ENCODE measurements at regions of chr1 and their contacts with region 1.

Region 1: DNA sequence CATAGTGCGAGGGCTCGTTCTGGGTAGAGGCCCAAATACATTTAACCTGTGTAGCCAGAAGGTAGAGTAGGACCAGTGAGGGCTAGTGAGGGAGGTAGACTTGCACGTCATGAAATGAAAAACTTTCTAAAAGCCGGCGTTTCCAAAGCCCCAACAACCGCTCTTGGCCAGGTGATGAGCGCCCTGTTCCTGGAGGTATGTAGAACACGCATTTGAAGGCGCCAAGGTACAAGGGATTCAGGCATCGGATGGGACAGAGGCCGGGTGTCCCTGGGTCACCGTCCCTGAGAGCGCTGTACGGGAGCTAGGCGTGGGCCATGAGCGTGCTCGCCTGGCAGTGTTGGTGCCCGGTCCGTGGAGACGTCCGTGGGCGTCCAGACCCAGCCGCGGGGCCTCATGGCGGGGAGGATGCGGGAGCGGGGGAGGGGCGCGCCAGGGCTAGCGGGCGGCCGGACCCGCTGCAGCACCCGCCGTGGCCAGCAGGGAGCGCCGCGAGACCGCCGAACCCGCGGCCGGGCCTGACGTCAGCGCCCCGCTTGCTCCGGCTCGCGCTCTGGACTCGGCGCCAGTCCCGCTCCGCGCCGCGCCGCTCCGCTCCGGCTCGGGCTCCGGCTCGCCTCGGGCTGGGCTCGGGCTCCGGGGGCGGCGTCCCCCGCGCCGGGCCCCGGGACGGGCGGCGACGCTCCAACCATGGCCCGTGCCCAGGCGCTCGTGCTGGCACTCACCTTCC is at the start of gene PTPRU:
- DNase-seq: peak; percentile 50 to 60
- ATAC-seq: peak; percentile 58 to 62
- H3K4me3 ChIP-seq: peak within 1 kb of the TSS; percentile 59 to 77 (median 72)
- H3K27ac ChIP-seq: peak within 1 kb of the TSS; percentile 73 to 86 (median 80)
- H3K4me1 ChIP-seq: peaks cover 9 to 11% of the 10 kb centered on the region in 2 donors
- H3K27me3 ChIP-seq: no peaks in the 10 kb centered on the region
- CTCF ChIP-seq: peak; percentile 59 to 99 (median 98)
- POLR2A ChIP-seq: peak; percentile 56 to 58
- total RNA-seq, gene PTPRU: 11.4 to 59.4 (median 35.3) TPM

Region 2: DNA sequence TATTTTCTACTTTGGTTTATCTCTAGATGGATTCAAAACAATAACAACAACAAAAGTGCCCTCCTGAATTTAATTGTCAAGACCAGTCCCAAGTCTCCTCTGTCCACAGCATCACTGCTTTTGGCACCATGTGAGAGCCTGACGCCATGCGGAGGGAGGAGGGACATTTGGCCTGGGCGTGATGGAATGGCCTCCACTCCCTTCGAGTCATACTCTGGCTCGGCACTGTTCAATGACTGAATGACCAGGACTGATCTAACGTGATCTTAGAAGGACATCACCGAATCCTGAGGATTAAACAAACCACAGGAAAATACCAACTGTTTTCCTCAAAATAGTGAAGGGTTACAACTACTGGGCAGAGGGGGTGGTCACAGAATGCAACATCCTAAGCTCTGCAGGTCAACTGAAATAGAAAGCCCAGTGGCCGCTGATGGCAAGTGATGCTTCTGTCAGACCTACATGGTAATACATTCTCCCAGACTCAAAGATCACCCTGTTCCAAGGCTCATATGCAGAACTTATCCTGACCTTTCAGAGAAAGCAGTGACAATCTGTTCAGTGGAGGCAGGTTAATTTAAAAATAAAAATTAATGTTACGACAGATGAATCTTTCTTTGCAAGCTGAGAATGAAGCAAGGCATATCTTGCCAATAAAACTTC is 73.5 kb before region 1 on chr1:
- in situ Hi-C with region 1: no loop called
- intact Hi-C with region 1: no loop called
- DNase-seq: peak in 1 of 2 donors; percentile 38
- ATAC-seq: peak; percentile 63 to 72
- H3K4me3 ChIP-seq: no peak overlapping the region
- H3K27ac ChIP-seq: peak overlapping the region; percentile 3 to 47 (median 15)
- H3K4me1 ChIP-seq: peaks cover 40 to 49% of the 10 kb centered on the region in 2 donors
- H3K27me3 ChIP-seq: no peaks in the 10 kb centered on the region
- CTCF ChIP-seq: no peak
- POLR2A ChIP-seq: no peak

Region 3: DNA sequence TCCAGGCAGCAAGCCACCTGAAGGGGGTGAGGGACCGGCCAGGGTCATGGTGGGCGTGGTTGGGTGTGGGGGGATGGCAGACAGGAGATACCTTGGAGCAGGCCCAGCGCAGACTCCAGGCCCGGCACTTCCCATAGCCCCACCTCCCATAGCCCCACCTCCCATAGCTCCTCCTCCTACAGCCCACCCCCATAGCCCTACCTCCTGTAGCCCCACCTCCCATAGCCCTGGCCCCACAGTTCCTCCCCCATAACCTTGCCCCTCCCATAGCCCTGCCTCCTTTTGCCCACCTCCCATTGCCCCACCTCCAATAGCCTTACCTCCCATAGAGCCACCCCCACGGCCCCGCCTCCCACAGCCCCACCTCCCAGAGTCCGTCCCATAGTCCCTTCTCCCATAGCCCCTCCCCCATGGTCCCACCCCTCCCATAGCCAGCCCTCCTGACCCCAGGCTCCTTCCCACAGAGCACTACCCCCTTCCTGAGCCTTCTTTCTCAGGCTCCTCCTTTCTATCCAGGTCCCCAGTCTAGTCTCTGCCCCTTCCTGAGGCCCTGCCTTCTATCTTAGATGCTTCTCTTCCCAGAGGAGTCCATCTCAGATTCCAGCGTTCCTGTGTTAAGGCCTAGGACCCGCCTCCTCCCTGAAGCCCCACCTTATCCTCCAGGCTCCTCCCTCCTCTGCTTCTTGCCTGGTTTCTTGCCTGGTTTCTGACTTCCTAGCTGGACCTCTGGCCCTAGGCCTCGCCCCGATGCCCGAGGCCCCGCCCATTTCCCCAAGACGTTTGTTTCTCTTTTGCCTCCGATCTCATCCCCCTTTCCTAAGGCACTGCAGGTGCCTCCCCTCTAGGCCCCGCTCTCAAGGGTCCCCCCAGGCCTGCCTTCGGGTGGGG is 47.0 kb after region 1 on chr1:
- in situ Hi-C with region 1: no loop called
- intact Hi-C with region 1: no loop called
- DNase-seq: no peak
- ATAC-seq: peak in 1 of 2 donors; percentile 21
- H3K4me3 ChIP-seq: no peak overlapping the region
- H3K27ac ChIP-seq: no peak overlapping the region
- H3K4me1 ChIP-seq: no peaks in the 10 kb centered on the region
- H3K27me3 ChIP-seq: no peaks in the 10 kb centered on the region
- CTCF ChIP-seq: no peak
- POLR2A ChIP-seq: no peak

Region 4: DNA sequence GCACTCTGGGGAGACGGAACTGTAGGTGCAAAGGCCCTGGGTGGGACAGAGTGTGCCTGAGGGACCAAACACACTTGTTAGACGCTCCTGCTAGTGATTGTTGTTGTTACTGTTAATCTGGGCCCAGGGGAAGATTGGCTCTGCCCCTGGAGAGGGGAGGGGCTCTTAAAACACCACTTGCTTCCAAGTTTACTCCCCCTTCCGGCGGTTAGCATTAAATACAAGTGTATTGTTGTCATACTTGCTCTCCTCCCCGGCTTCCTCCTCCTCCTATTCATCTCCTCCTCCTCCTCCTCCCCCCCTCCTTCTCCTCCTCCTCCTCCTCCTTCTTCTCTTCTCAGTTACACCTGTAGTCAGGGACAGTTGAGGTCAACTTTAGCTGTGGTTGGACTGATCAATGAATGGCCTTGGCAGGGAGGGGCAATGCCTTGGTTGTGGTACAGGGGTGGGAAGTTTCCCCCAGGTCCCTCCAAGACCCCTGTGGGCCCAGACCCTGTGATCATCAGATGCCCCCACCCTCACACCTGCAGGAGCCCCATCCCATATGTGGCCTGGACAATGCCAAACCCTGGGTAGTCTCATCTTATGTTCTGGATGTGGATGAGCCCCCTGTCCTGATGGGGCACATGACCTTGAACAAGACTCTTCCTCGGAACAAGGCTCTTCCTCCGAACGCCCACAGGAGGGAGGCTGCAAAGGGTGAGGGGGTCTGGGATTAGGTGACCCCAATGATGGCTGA is 217.6 kb after region 1 on chr1:
- in situ Hi-C with region 1: no loop called
- intact Hi-C with region 1: loop called (anchors 5 kb)
- DNase-seq: no peak
- ATAC-seq: no peak
- H3K4me3 ChIP-seq: no peak overlapping the region
- H3K27ac ChIP-seq: no peak overlapping the region
- H3K4me1 ChIP-seq: no peaks in the 10 kb centered on the region
- H3K27me3 ChIP-seq: no peaks in the 10 kb centered on the region
- CTCF ChIP-seq: peak in 1 of 5 experiments; percentile 19
- POLR2A ChIP-seq: no peak

Region 5: GRCh38 chr1:30085811-30086770 is 850.0 kb after region 1 on chr1:
- in situ Hi-C with region 1: loop called in 2 of 4 experiments (anchors 25 kb)
- intact Hi-C with region 1: loop called (anchors 5 kb)
- DNase-seq: no peak
- ATAC-seq: no peak
- H3K4me3 ChIP-seq: peak overlapping the region in 1 of 4 donors; percentile 21
- H3K27ac ChIP-seq: no peak overlapping the region
- H3K4me1 ChIP-seq: peaks cover 0 to 3% of the 10 kb centered on the region in 2 donors
- H3K27me3 ChIP-seq: peaks cover 0 to 4% (median 3%) of the 10 kb centered on the region in 3 donors
- CTCF ChIP-seq: peak; percentile 42 to 73 (median 54)
- POLR2A ChIP-seq: no peak

Region 6: DNA sequence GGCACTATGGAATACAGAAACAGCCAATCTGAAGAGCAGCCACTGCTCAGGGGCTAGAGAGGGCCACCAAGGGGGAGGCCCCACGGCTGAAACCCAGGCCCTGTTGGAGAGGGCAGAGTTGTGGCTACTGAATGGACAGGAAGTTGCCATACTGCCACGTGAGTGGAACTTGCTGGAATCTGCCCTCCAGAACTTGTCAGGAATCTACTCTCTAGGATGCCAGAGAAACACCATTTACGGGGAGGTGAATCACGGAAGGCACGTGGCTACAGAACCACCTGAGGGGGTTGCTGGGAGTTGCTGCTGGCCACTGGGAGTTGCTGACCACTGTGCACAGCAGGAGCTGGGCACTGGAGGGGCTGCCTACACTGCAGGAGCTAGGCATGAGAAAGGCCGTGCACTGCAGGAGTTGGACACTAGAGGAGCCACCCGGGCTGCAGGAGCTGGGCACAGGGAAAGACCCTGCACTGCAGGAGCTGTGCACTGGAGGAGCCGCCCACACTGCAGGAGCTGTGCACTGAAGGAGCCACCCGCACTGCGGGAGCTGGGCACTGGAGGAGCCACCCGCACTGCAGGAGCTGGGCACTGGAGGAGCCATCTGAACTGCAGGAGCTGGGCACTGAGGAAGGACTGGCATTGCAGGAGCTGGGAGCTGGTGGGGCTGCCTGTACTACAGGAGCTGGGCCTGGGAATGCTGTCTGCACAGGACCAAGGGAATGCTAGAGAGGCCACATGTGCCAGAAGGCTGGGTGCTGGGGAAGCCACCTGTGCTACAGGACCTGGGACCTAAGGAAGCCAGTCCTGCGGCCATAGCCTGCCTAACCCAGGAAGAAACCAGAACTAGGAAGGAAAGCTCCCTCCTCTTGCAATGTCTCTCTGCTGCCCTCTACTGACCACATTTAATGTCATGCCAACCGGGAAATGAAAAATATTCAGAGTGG is 1143.8 kb after region 1 on chr1:
- in situ Hi-C with region 1: loop called in 2 of 4 experiments (anchors 10 to 25 kb)
- intact Hi-C with region 1: loop called (anchors 1 kb)
- DNase-seq: peak; percentile 18 to 31
- ATAC-seq: peak; percentile 76 to 79
- H3K4me3 ChIP-seq: no peak overlapping the region
- H3K27ac ChIP-seq: no peak overlapping the region
- H3K4me1 ChIP-seq: peaks cover 4 to 6% of the 10 kb centered on the region in 2 donors
- H3K27me3 ChIP-seq: no peaks in the 10 kb centered on the region
- CTCF ChIP-seq: peak; percentile 63 to 86 (median 77)
- POLR2A ChIP-seq: no peak